ENCODE measurements at regions of chr1 and their contacts with region 1.

Region 1: GRCh38 chr1:46036894-46037839 is 95.3 kb downstream of the PIK3R3 start:
- DNase-seq: peak; percentile 89
- H3K4me3 ChIP-seq: no peak overlapping the region
- H3K27ac ChIP-seq: no peak overlapping the region
- H3K4me1 ChIP-seq: peaks cover 4% of the 10 kb centered on the region
- H3K27me3 ChIP-seq: no peaks in the 10 kb centered on the region
- CTCF ChIP-seq: peak; percentile 100

Region 2: DNA sequence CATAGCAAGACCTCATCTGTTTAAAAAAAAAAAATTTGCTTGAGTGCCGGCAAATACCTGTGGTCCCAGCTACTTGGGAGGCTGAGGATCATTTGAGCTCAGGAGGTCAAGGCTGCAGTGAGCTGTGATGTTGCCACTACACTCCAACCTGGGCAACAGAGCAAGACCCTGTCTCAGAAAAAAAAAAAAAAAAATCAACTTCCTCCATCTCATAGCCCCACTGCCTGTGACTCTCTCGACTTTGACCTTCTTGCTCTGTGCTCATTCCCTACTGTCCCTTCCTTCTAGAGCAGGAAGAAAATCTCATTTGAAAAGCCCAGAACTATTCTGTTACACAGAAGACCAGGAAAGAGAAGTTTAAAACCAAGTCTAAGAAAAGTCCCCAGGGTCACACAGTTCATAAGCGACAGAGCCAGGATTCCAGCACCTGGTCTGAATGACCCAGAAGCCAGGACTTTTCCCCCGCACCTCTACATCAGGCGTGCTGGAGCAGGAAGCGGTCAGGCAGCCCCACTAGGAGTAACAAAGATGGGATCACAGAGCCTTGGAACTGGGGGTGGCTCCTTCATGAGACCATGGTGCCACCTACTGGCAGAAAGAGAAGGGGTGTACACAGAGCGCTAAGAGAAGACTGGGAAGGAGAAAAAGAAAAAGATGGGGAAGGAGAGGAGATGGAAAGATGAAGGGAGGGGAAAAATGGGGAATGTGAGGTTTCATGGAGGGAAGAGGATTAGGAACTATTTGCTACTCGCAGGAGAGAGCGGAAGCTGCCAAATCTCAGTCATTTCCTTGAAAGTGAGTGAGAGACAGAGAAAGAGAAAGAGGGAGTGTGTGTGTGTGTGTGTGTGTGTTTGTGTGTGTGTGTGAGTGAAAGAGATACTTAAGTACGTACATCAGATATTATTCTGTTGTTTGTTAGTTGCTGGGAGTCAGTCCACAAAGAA is 142.2 kb after region 1 on chr1:
- intact Hi-C with region 1: loop called (anchors 1 kb)
- DNase-seq: peak; percentile 90
- H3K4me3 ChIP-seq: no peak overlapping the region
- H3K27ac ChIP-seq: peak overlapping the region; percentile 95
- H3K4me1 ChIP-seq: peaks cover 5% of the 10 kb centered on the region
- H3K27me3 ChIP-seq: no peaks in the 10 kb centered on the region
- CTCF ChIP-seq: peak; percentile 79

Region 3: DNA sequence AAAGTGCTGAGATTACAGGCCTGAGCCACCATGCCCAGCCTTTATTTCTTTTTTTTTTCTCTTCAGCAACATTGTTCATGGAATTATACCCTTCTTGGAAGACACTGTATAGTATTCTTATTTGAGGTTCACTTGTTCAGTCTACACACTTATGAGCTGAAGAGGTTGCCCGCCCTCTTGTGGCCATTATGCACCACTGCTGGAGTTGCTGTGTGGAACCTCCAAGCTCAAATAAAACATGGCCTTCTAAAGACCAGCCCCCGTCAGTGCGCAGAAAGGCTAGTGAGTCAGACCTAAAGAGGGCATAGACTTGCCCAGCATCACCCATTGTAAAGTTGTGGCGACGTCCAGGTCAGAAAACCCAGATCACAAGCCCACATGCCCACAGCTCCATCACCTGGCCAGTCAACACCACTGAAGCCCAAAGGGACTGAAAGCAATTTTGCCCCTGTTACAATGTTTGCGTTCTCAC is 186.3 kb after region 1 on chr1:
- intact Hi-C with region 1: loop called (anchors 1 kb)
- DNase-seq: peak; percentile 71
- H3K4me3 ChIP-seq: no peak overlapping the region
- H3K27ac ChIP-seq: no peak overlapping the region
- H3K4me1 ChIP-seq: no peaks in the 10 kb centered on the region
- H3K27me3 ChIP-seq: no peaks in the 10 kb centered on the region
- CTCF ChIP-seq: peak; percentile 92